AG04449 (cell line): ENCODE measurements at regions of chr10 and their contacts with region 1.

Region 1: GRCh38 chr10:33193057-33193700 is 141.3 kb downstream of the NRP1 start:
- DNase-seq: no peak
- H3K4me3 ChIP-seq: no peak overlapping the region
- CTCF ChIP-seq: peak; percentile 73

Region 2: DNA sequence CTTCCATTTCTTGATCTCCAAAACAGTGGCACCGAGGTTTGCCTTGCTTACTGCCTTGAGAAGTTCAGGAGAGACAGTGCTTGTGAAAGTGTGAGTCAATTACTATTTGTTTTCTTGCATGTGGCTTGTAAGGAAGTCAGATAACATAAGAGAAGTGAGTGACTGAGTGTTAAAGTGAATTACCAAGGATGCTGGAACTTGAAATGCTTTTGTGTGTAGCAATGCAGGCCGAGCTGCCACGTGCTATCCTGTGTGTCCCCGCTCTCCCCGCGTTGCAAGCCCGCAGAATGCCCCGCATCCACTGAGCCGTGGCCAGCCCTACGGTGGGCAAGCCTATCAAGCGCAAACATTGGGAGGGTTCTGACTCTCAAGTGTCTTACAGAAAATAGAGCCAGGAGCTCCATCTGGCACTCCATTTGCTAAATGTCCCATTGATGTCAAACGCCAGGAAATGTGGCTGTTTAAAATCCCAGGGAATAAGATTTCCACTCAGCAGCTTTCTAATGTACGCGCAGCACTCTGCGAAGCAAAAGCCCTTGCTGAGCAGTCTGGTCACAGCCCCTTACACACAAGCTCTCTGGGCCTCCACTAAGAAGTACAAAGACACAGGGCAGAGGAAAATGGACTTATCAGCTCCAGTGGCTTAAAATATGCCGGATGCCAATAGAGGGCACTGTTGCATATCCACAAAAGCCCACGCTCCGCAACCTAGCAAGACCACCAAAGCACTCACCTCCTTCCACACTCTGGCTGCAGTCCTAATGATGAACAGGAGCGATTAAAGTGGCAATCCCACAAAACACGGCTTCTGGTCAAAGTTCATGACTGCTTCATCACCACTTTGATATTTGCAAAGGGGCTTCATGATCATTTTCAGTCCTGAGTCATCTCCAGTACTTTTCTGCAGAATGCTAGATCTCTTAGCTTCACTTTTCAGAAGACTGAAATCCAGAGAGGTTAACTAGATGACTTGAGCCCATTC is 77.2 kb before region 1 on chr10:
- CTCF ChIA-PET with region 1: interaction called, 12 read pairs
- POLR2A ChIA-PET with region 1: no interaction called
- DNase-seq: no peak
- H3K4me3 ChIP-seq: no peak overlapping the region
- CTCF ChIP-seq: peak; percentile 52

Region 3: GRCh38 chr10:33211106-33211878 is 18.1 kb after region 1 on chr10:
- CTCF ChIA-PET with region 1: interaction called, 24 read pairs
- POLR2A ChIA-PET with region 1: no interaction called
- DNase-seq: no peak
- H3K4me3 ChIP-seq: no peak overlapping the region
- CTCF ChIP-seq: no peak

Region 4: GRCh38 chr10:33258967-33259366 is 65.8 kb after region 1 on chr10:
- CTCF ChIA-PET with region 1: interaction called, 14 read pairs
- POLR2A ChIA-PET with region 1: interaction called, 4 read pairs
- DNase-seq: no peak
- H3K4me3 ChIP-seq: no peak overlapping the region
- CTCF ChIP-seq: no peak

Region 5: DNA sequence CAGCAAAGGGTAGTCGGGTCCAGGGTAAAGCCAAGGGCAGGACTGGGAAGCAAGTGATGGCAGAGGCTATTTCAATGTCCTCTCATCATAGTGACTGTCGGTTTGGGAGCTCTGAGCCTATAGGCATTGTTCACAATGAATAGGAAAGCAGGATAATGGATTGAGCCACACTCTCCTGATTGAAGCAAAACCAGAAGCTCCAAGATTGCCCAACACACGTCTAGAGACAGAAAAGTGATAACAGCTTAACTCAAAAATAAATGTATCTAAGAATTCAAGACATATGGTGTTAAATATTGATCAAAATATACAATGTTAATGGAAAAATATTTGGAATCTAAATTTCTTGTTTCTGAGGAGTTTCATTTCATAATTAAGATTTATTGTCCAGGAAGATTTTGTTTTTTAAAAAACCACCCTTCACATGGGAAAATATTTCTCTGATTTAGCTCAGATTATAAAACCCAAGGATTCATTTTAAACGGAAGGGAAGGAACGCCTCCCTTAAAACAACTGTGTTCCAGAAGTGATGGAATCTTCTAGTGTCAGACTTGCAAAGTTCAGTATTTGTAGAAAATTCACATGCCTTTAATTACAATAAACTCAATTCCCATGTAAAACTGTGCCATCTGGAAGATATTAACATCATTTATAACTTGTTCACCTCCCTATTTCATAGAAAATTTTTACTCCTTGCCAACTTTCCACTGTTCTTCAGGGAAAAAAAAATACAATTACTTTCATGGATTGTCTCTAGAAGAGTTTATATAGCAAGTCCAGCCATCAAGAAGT is 86.8 kb after region 1 on chr10:
- CTCF ChIA-PET with region 1: interaction called, 13 read pairs
- POLR2A ChIA-PET with region 1: no interaction called
- DNase-seq: no peak
- H3K4me3 ChIP-seq: no peak overlapping the region
- CTCF ChIP-seq: no peak

Region 6: GRCh38 chr10:33330543-33331378 is 137.6 kb after region 1 on chr10:
- CTCF ChIA-PET with region 1: interaction called, 39 read pairs
- POLR2A ChIA-PET with region 1: no interaction called
- DNase-seq: no peak
- H3K4me3 ChIP-seq: peak overlapping the region; percentile 86
- CTCF ChIP-seq: peak; percentile 81

Region 7: GRCh38 chr10:33584569-33584968 is 391.4 kb after region 1 on chr10:
- CTCF ChIA-PET with region 1: no interaction called
- POLR2A ChIA-PET with region 1: no interaction called
- DNase-seq: no peak
- H3K4me3 ChIP-seq: no peak overlapping the region
- CTCF ChIP-seq: no peak